ENCODE measurements at regions of chr2 and their contacts with region 1.

Region 1: DNA sequence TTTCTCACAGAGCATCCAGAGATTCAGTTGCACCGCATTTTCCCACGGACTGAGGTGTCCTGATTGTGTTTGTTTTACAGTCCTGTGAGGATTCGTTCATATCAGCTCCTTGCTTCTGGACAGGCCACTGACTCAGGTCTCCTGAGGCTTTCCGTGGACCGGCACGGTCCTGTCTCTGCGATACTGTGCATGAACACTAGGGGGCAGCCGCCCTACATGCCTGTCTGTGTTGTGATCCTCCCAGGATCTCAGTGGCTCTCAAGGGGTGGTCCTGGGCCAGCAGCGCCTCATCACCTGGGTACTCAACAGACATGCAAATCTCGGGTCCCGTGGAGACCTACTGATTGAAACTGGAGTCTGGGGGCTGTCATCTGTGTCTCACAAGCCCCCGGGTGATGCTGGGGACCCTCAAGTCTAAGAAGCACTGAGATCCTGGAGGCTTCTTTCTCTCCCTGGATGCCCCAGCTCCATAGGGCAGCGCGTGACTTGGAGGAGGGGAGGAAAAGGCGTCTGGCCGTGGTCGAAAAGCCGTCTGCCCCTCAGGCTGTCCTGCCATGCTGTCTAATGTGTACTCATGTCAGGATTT is 28.9 kb downstream of the IL1R2 start:
- DNase-seq: no peak
- H3K4me3 ChIP-seq: no peak overlapping the region
- H3K27ac ChIP-seq: no peak overlapping the region
- H3K4me1 ChIP-seq: peaks cover 12% of the 10 kb centered on the region
- H3K27me3 ChIP-seq: no peaks in the 10 kb centered on the region
- CTCF ChIP-seq: peak; percentile 97 to 99 (median 99)

Region 2: DNA sequence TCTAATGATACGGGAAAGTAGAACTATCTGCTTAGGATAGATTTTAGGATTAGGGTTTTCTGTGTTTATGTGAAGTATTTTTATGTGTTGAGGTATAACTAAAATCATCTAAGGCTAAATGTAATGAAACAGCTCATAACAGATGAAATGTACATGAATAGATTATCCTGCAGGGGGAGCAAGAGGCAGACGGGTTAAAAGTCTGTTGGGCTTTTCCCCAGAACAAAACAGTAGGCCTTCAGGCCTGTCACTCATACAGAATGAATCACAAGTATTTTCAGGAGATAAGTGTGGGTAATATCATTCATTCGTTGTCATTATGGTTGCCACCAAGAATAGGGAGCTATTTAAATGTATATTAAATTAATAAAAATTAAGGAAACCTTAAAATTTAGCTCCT is 136.8 kb before region 1 on chr2:
- dilution Hi-C with region 1: no loop called
- DNase-seq: no peak
- H3K4me3 ChIP-seq: no peak overlapping the region
- H3K27ac ChIP-seq: peak overlapping the region; percentile 24
- H3K4me1 ChIP-seq: peaks cover 21% of the 10 kb centered on the region
- H3K27me3 ChIP-seq: no peaks in the 10 kb centered on the region
- CTCF ChIP-seq: peak; percentile 53 to 72 (median 55)

Region 3: DNA sequence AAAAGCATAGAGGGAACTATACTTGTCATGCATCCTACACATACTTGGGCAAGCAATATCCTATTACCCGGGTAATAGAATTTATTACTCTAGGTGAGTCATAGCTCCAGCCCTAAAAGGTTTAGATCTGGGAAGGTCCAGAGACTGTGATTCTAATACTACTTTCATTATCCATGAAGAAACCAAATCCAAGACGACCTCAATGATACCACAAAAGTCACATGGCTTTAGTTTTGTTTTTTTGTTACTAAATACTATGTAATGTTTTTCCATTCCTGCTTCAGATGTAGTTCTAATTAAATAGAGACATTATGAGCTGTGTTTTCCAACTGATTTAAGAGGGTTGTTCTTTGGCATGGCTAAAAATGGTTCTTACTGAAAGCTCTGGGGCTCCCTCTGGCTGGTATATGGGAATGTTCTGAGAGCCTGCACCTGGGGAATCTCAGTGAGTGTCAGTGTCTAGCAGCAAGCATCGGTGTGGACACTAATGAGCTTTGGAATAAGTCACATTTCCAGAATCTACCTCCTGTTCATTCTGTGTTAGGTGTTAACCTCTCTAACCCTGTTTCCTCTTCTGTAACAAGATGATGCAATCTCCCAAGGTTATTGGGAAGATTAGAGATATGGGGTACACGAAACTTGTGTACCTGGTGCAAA is 145.6 kb after region 1 on chr2:
- dilution Hi-C with region 1: loop called (anchors 25 kb)
- DNase-seq: no peak
- H3K4me3 ChIP-seq: peak overlapping the region in 1 of 3 experiments; percentile 21
- H3K27ac ChIP-seq: peak overlapping the region; percentile 8
- H3K4me1 ChIP-seq: peaks cover 14% of the 10 kb centered on the region
- H3K27me3 ChIP-seq: no peaks in the 10 kb centered on the region
- CTCF ChIP-seq: peak; percentile 47 to 52 (median 50)

Measured in keratinocyte (primary cell).